Activated CD4-positive, alpha-beta memory T cell treated with anti-CD3 and anti-CD28 coated beads for 36 hours (primary cell): ENCODE measurements at regions of chr3 and their contacts with region 1.

Region 1: DNA sequence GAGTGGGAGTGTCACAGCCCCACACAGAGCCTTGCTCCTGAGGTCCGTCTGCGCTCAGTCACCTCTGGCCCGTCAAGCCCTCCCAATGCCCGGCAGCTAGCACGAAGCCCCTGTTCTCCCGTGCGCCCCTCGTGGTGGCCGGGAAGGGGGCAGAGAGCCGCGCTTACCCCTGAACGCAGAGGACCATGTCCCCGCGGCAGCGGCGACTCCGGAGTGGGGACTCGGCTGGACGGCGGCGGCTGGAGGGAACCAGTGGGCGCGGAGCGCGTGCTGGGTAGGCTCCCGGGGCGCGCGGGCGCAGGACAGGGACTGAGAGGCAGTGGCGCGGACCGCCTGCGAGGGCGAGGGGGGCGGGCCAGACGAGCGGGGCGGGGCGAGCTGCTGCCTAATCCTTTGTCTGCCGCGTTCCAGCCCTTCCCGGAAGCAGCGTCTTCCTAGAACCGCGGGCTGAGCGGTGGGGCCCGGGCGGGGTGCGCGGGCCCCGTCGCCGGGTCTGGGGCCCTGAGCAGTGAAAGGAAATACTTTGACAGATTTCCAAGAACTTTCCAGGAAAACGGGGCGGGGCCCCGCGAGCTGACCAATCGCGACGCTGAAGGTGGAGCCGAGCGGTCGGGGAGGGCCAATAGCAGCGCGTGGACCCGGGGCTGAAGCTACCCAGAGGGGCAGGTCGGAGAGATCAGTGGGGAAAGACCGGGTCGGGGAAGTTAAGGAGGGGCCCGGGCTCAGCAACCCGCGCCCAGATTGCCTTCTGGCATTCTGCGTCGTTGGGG is at the start of gene CISH:
- DNase-seq: peak; percentile 99
- H3K4me3 Mint-ChIP-seq: peak within 1 kb of the TSS; percentile 98
- H3K27ac Mint-ChIP-seq: peak within 1 kb of the TSS; percentile 100
- H3K4me1 Mint-ChIP-seq: peaks cover 39% of the 10 kb centered on the region
- H3K27me3 Mint-ChIP-seq: peaks cover 6% of the 10 kb centered on the region
- total RNA-seq, gene CISH: 319 TPM

Region 2: DNA sequence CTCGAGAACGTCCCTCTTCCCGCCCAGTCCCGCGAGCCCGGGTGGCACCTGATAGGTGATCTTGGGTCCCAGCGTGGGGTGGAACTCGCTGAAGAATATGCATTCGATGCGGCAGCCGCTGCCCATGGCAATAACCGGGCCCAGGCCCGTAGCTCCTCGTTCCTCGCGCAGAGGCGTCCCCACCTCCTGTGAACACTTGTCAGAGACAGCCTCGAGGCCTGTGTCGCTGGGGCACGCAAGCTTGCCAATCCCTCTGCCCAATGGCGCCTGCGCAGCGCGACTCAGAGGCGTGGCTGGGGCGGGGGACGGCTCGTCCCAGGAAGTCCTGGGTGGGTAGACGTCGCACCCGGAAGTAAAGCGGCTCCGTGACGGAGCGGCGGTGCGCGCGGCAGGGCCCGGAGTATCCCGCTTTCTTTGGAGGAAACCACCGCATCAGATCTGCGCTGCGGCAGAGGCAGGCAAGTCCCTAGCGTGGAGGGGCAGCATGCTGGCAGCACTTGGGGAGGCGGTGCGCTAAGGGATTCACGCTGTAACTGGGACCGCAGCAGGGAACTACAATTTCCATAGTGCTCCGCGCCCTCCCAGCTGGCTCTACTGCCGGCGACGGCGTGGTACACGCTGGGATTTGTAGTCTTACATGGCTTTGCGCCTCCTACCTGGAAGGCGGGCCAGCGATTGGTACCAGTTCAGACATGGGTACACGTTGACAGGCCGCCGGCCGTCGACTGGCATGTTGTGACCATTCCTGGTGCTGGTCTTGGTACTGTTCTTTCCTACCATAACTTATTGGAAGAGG is 260.9 kb before region 1 on chr3 and contains the starts of genes CYB561D2 and NPRL2:
- CTCF ChIA-PET with region 1: interaction called, 5 read pairs
- POLR2A ChIA-PET with region 1: interaction called, 3 read pairs
- intact Hi-C with region 1: loop called (anchors 5 kb)
- DNase-seq: peak; percentile 100
- H3K4me3 Mint-ChIP-seq: peak within 1 kb of the TSS; percentile 94
- H3K27ac Mint-ChIP-seq: peak within 1 kb of the TSS; percentile 97
- H3K4me1 Mint-ChIP-seq: peaks cover 62% of the 10 kb centered on the region
- H3K27me3 Mint-ChIP-seq: no peaks in the 10 kb centered on the region
- total RNA-seq, gene CYB561D2: 17.8 to 20.1 TPM
- total RNA-seq, gene NPRL2: 33.2 to 35.8 TPM

Region 3: DNA sequence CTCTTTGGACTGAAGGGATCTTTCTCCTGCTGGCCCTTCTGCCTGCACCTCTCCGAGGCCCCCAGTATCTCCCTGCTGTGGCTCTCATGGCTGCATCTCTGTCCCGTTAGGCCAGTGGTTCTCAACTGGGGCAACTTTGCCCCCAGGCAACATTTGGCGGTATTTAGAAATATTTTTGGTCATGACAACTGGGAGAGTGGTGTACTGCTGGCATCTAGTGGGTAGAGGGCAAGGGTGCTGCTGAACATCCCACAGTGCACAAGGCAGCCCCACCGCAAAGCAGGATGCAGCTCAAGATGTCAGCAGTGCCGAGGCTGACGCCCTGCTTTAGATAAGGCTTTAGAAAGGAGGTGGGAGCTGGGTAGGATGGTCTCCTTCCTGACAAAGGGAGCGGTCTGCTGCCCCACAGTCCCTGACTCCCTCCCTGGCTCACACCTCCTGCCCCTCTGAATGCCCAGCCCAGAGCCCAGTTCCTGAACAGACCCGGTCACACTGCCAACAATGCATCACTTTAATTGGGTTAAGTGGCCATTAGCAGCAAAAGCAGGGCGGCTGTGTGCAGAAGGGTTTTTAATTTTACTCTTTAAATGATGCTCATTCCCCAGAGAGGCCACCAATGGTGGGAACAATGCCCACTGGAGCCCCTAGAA is 183.5 kb before region 1 on chr3:
- CTCF ChIA-PET with region 1: no interaction called
- POLR2A ChIA-PET with region 1: no interaction called
- intact Hi-C with region 1: no loop called
- DNase-seq: no peak
- H3K4me3 Mint-ChIP-seq: no peak overlapping the region
- H3K27ac Mint-ChIP-seq: no peak overlapping the region
- H3K4me1 Mint-ChIP-seq: no peaks in the 10 kb centered on the region
- H3K27me3 Mint-ChIP-seq: no peaks in the 10 kb centered on the region

Region 4: DNA sequence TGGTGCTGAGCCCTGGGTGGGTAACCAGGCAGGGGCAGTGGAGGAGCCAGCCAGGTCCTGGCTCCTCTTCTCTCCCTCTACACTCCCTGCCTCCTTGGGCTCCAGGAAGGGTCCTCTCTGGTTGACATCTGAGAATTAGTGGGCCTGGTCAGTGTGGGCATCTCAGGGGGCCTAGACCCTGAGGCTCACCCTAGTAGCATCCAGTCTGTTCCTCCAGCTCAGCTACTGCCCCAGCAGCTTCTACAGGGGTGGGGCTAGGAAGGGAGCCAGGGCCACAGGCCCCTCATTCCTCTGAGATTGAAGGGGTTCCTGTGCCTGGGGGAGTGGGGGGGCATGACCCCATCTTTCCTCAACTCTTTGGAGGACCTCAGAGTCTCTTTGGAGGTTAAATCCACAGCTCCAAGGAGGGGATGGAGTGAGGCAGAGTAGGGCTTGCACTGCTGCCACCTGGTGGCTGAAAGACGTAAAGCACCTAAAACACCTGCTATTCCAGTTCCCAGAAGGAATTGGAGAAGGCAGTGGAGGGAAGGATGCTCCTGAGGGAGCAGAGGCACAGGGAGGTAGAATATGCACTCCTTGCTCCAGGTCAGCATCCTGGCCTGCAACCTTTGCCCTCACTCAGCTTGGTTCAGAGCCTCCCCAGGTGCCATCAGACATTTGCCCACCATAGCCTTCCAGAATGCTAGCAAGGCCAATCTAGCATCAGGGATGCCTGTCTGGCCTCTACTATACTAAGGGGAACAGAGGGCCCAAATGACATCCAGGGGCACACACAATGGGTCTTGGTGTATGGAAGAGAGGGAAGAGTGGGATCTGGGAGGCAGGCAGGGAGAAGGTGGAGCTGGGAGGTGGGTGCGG is 69.2 kb before region 1 on chr3:
- CTCF ChIA-PET with region 1: interaction called, 21 read pairs
- POLR2A ChIA-PET with region 1: interaction called, 3 read pairs
- intact Hi-C with region 1: no loop called
- DNase-seq: peak; percentile 72
- H3K4me3 Mint-ChIP-seq: no peak overlapping the region
- H3K27ac Mint-ChIP-seq: no peak overlapping the region
- H3K4me1 Mint-ChIP-seq: no peaks in the 10 kb centered on the region
- H3K27me3 Mint-ChIP-seq: no peaks in the 10 kb centered on the region

Region 5: GRCh38 chr3:50587806-50588758 is 23.6 kb before region 1 on chr3:
- CTCF ChIA-PET with region 1: interaction called, 299 read pairs
- POLR2A ChIA-PET with region 1: interaction called, 859 read pairs
- intact Hi-C with region 1: loop called (anchors 1 kb)
- DNase-seq: peak; percentile 96
- H3K4me3 Mint-ChIP-seq: peak overlapping the region; percentile 68
- H3K27ac Mint-ChIP-seq: peak overlapping the region; percentile 98
- H3K4me1 Mint-ChIP-seq: peaks cover 94% of the 10 kb centered on the region
- H3K27me3 Mint-ChIP-seq: no peaks in the 10 kb centered on the region

Region 6: GRCh38 chr3:50652709-50653108 is 41.1 kb after region 1 on chr3:
- CTCF ChIA-PET with region 1: interaction called, 188 read pairs
- POLR2A ChIA-PET with region 1: interaction called, 13 read pairs
- intact Hi-C with region 1: loop called (anchors 1 kb)
- DNase-seq: peak; percentile 77
- H3K4me3 Mint-ChIP-seq: no peak overlapping the region
- H3K27ac Mint-ChIP-seq: peak overlapping the region; percentile 19
- H3K4me1 Mint-ChIP-seq: peaks cover 28% of the 10 kb centered on the region
- H3K27me3 Mint-ChIP-seq: no peaks in the 10 kb centered on the region

Region 7: GRCh38 chr3:51371943-51372557 is 760.4 kb after region 1 on chr3:
- CTCF ChIA-PET with region 1: interaction called, 41 read pairs
- POLR2A ChIA-PET with region 1: no interaction called
- intact Hi-C with region 1: loop called (anchors 1 kb)
- DNase-seq: peak; percentile 63
- H3K4me3 Mint-ChIP-seq: no peak overlapping the region
- H3K27ac Mint-ChIP-seq: no peak overlapping the region
- H3K4me1 Mint-ChIP-seq: no peaks in the 10 kb centered on the region
- H3K27me3 Mint-ChIP-seq: peaks cover 4% of the 10 kb centered on the region

Region 8: GRCh38 chr3:51670823-51671733 is 1059.4 kb after region 1 on chr3 and contains the start of gene TEX264:
- CTCF ChIA-PET with region 1: no interaction called
- POLR2A ChIA-PET with region 1: no interaction called
- intact Hi-C with region 1: loop called (anchors 5 kb)
- DNase-seq: peak; percentile 92
- H3K4me3 Mint-ChIP-seq: peak within 1 kb of the TSS; percentile 87
- H3K27ac Mint-ChIP-seq: peak within 1 kb of the TSS; percentile 89
- H3K4me1 Mint-ChIP-seq: peaks cover 62% of the 10 kb centered on the region
- H3K27me3 Mint-ChIP-seq: no peaks in the 10 kb centered on the region
- total RNA-seq, gene TEX264: 44.9 to 45.2 TPM